AG04449 (cell line): ENCODE measurements at regions of chr22 and their contacts with region 1.

Region 1: DNA sequence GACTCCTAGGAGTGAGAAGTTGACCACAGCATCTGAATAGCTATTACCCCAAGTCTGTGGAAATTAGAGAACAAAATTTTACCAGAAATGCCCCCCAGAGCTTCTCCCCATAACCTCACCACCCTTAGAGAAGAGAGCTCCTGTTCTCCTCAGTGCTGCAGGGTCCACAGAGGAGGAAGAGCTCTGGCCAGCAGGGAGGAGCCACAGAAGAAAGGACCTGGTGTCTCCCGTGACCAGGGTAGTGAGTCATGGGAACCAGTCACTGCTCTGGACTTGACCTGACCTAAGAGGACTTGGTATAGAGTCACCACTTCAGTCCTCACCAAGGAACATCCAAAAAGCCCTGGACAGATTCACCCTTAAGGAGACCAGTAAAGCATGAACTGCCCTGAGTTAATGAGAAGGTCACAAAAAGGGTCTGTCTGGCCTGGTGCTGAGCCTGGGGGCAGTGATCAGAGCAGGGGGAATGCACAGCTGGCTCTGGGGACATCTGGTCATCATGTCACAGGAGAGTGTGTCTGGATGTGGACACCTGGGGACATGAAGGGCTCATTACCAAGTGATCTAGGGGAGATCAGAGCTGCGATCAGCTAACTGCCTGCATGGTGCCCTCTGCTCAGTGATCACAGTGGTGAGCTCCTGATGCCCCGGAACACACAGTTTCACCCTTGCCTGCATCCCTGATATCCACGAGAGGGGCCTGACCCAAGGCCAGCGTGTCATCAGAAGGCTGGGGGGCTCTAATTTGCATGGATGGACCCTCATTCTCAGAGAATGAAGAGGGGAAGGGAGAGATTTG is 103.3 kb upstream of the TOP3B start:
- DNase-seq: no peak
- H3K4me3 ChIP-seq: no peak overlapping the region
- CTCF ChIP-seq: no peak

Region 2: DNA sequence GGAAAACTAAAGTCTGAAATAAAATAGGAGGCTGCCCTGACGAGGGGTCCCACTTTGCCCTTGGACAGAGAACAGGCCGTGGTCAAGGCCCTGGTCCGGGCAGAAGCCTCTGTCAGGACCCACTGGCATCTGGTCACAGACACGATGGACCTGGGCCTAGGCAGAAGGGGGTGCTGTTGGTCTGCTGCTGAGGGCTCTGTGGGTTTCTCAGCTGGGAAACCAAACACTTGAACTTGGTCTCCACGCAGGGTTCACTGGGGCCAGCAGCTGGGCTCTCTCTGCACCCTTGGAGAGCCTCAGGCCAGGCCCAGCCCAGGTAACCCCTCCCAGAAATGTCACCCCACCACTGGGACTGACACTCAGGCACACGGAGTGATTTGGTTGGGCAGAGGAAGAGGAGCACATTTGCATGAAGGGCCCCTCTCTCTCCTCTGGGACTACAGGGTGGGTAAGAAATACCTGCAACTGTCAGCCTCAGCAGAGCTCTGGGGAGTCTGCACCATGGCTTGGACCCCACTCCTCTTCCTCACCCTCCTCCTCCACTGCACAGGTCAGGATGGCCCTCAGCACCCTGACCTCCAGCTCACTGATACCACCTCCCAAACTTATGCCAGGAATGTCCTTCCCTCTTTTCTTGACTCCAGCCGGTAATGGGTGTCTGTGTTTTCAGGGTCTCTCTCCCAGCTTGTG is 55.3 kb before region 1 on chr22:
- CTCF ChIA-PET with region 1: no interaction called
- POLR2A ChIA-PET with region 1: no interaction called
- DNase-seq: no peak
- H3K4me3 ChIP-seq: no peak overlapping the region
- CTCF ChIP-seq: peak; percentile 32

Region 3: GRCh38 chr22:22061085-22062077 is 24.5 kb before region 1 on chr22:
- CTCF ChIA-PET with region 1: no interaction called
- POLR2A ChIA-PET with region 1: no interaction called
- DNase-seq: no peak
- H3K4me3 ChIP-seq: no peak overlapping the region
- CTCF ChIP-seq: peak; percentile 6

Region 4: DNA sequence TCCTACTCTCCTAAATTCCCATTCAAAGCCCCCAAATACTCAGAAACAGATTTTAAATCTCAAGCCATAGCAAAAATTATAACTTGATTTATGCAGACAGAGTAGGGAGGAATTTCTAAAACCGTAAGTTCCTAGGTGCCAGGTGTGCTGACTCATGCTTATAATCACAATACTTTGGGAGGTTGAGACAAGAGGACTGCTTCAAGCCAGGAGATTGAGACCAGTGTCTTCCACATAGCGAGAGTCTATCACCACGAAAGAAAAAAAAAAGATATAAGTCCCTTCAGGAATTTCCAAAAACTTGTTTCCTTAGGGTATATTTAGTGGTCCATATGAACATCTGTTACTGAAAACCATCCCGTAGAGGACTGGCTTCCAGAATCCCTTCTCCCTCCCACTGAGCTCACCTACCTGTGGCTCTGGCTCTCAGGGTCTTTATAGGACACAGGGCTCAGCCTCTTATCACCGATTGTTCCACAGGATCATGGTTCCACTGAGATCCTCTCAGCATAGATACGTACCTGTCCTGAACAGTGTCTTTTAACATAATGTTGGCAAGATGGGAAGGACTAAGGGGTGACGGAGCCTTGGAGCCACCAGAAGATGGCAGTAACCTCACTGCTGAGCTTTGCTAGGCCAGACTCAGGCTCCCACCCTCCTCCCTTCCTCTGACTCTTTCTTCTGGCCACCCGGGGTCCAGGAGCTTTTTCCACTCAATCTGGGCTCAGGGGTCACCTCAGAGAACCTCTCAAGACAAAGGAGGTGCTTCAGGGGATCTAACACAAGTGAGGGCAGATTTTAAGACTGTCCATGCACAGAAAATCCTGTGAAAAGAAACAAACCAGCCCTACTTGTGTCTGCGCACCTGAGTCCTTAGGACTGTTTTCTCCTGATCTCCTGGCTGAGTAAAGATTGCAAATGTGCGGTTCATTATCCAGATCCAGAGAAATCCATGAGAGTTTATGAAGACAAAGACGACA is 14.2 kb after region 1 on chr22:
- CTCF ChIA-PET with region 1: interaction called, 11 read pairs
- POLR2A ChIA-PET with region 1: no interaction called
- DNase-seq: no peak
- H3K4me3 ChIP-seq: no peak overlapping the region
- CTCF ChIP-seq: peak; percentile 40